OCI-LY7 (cell line): ENCODE measurements at regions of chr18 and their contacts with region 1.

Region 1: DNA sequence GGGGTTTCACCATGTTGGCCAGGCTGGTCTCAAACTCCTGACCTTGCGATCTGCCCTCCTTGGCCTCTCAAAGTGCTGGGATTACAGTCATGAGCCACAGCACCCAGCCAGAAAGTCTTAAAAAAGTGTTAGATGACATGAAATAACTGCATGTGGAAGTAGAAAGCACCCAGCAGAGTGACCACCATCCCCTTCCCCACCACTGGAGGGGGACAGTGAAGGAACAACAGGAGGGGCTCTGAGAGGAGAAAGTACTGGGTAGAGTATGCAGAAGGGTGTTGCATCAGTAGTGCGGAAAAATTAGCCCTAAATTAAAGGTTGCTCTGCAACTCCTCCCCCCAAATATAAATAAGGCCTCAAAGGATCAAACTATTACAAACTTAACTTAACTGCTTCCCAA is 230.5 kb downstream of the ZNF521 start:
- DNase-seq: no peak
- H3K4me3 ChIP-seq: peak overlapping the region; percentile 11
- H3K27ac ChIP-seq: peak overlapping the region; percentile 54
- H3K4me1 ChIP-seq: peaks cover 42% of the 10 kb centered on the region
- CTCF ChIP-seq: peak; percentile 51

Region 2: DNA sequence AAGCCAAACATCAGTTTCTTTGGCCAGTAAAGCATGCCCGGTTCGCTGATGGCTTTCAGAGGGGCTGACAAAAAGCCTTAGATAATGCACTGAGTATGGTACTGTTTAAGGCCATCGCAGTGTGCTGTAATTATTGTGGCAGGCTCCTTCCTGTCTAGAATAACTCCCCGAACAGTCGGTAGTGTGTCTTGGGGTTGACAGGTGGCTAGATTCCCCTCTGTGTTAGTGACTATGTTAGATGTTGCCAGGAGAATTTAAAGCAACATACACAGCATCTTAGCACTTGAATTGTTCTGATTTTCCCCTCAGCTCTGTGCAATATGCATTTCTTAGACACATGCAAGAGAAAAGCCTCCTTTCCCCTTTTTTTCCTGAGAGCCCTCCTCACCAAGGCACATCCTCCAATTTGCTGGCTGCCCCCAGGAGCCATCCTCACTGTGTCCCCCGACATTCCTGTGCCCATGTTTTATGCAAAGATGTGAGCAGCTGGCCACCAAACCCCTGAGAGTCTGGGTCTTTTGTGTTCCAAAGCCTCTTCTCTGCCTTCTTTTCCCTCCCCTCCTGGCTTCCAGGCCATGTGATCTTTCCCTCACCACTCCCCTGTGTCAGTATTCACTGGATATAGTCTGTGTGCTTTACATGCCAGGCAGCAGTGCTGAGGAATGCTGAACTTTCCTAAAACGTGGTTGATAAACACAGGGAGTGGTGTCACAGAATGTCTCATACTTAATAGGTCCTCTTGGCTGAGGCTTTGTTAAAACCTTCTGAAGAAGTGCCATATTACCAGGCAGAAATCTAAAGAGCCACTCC is 329.5 kb before region 1 on chr18:
- CTCF ChIA-PET with region 1: no interaction called
- POLR2A ChIA-PET with region 1: no interaction called
- intact Hi-C with region 1: no loop called
- DNase-seq: no peak
- H3K4me3 ChIP-seq: no peak overlapping the region
- H3K27ac ChIP-seq: no peak overlapping the region
- H3K4me1 ChIP-seq: no peaks in the 10 kb centered on the region
- CTCF ChIP-seq: no peak

Region 3: DNA sequence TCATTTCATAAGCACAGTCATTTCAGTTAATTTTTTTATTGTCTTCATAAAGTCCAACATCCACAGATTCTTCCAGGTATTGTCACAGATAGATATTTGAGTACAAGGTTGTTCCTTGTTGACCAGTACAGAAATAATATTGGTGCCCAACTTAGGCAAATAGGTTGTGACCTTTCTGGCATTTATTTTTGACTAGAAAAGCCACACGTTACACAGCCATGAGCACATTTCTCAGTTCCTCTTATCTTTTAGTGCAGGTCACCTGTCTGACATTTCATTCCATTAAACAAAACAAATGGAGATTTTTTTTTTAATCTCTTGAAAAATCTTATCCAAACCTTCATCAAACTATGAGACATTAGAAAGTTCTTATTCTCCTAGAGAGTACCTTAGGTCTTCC is 198.3 kb before region 1 on chr18:
- CTCF ChIA-PET with region 1: no interaction called
- POLR2A ChIA-PET with region 1: no interaction called
- intact Hi-C with region 1: loop called (anchors 5 kb)
- DNase-seq: peak; percentile 84
- H3K4me3 ChIP-seq: peak overlapping the region; percentile 55
- H3K27ac ChIP-seq: peak overlapping the region; percentile 95
- H3K4me1 ChIP-seq: peaks cover 78% of the 10 kb centered on the region
- CTCF ChIP-seq: no peak

Region 4: DNA sequence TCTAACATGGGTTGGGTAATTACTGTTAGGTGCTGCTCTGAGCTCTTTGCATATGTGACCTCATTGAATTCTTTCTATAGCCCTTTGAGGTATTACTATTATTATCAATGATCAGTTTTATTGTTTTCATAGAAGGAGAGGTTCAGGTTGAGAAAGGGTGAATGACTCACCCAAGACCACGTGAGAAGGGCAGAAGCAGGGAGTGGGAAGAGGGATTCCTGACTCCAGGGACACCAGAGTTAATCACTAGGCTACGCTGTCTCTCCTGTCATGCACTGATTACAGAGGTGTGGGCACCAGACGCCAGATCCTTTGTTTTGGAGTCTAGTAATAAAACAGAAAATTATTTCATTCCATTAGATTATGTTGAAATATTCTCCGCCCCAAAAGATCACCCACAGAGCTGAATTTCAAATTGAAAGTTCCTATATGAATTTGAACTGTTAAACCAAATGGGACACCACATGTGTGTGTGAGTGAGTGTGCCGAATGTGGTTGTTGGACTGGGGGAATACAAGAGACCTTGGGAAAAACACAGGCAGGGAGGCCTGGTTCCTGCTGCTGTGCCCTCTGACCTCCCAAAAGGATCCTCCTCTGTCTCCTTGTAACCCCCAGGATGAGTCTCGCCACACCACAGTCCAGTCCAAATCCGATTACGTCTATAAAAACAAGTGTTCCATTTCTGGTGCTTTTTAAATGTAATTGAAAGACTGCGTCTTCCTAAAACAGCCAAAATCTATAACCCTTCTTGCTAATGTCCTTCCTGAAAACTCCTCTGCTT is 15.2 kb after region 1 on chr18:
- CTCF ChIA-PET with region 1: no interaction called
- POLR2A ChIA-PET with region 1: interaction called, 35 read pairs
- intact Hi-C with region 1: no loop called
- DNase-seq: no peak
- H3K4me3 ChIP-seq: no peak overlapping the region
- H3K27ac ChIP-seq: no peak overlapping the region
- H3K4me1 ChIP-seq: peaks cover 10% of the 10 kb centered on the region
- CTCF ChIP-seq: no peak

Region 5: DNA sequence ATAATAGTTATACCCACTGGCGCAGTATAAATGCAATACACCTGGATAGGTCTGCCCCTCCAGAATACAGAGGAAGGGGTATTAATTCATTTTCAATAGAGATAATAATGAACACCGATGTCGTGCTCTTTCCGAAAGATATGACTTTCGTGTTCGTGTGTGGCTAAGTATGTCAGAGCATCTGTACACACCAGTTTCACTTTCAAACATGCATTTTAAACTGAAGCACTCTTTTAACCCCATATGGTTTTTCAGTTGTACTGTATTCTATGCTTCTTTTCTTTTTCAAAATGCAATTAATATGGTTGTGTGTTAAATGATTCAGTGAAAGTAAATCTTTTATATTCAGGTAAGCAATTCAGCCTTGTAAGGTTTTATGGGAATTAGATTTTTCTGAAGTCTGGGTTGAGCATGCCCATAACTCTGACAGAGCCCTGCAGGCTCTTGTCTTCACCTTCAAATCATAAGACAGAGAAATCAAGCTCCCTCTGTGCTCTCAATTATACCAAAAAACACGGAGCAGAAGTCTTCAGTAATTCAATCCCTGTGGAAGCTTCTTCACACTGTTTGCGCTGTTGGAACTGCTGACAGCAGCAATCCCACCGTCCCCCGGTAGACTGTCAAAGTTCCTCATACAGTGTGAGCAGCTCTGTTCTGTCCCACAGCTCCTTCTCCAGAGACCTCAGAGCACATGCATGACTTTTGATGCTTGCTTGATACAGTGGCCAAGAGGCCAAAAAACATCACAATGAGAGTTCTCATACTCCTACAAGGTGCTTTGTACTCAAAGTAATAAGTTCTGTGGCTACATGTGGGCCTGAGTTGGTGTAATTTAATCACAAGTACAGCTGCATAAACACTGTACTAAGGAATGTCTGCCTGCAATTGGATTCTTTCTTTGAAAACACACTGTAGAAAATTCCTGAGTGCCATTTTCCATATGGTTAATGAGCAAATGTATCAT is 43.7 kb after region 1 on chr18:
- CTCF ChIA-PET with region 1: no interaction called
- POLR2A ChIA-PET with region 1: interaction called, 3 read pairs
- intact Hi-C with region 1: loop called (anchors 5 kb)
- DNase-seq: no peak
- H3K4me3 ChIP-seq: peak overlapping the region; percentile 42
- H3K27ac ChIP-seq: no peak overlapping the region
- H3K4me1 ChIP-seq: peaks cover 10% of the 10 kb centered on the region
- CTCF ChIP-seq: no peak

Region 6: DNA sequence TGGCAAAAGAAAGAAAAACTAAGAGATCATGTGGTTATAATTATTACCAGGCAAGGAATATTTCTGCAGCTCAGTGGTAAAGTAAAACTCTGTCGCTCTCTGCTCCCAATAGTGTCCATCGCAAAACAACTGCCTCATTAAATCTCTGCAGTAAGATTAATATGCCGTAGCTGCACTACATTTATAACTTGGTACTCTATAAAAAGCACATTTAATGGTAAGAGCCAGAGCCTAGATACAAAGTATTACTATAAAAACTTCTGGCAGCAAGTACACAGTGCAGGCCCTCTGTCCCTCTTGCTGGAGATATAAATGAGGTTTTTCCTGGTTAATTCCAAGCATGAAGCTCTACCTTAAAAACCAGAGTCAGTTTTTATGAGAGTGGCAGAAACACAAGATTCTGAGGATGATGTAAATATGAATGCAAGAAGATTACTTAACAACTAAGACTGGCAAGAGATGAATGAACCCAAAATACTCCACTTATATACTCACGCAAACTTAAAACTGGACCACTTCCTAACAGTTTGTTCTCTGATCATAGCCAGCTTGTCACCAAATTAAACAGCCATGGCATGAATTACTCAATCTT is 205.0 kb after region 1 on chr18:
- CTCF ChIA-PET with region 1: no interaction called
- POLR2A ChIA-PET with region 1: no interaction called
- intact Hi-C with region 1: no loop called
- DNase-seq: no peak
- H3K4me3 ChIP-seq: no peak overlapping the region
- H3K27ac ChIP-seq: no peak overlapping the region
- H3K4me1 ChIP-seq: no peaks in the 10 kb centered on the region
- CTCF ChIP-seq: no peak

Region 7: GRCh38 chr18:25351777-25352628 is 230.6 kb after region 1 on chr18 and contains the start of gene ZNF521:
- CTCF ChIA-PET with region 1: no interaction called
- POLR2A ChIA-PET with region 1: no interaction called
- intact Hi-C with region 1: loop called (anchors 5 kb)
- DNase-seq: peak; percentile 80
- H3K4me3 ChIP-seq: peak within 1 kb of the TSS; percentile 71
- H3K27ac ChIP-seq: no peak within 1 kb of the TSS
- H3K4me1 ChIP-seq: peaks cover 19% of the 10 kb centered on the region
- CTCF ChIP-seq: 0 out of 2 replicates have a peak, but pooled peaks have one; percentile 4
- total RNA-seq, gene ZNF521: 0.18 and 0.85 TPM in 2 replicates